Lower leg skin (tissue), 4 donors: ENCODE measurements at regions of chr11 and their contacts with region 1.

Region 1: DNA sequence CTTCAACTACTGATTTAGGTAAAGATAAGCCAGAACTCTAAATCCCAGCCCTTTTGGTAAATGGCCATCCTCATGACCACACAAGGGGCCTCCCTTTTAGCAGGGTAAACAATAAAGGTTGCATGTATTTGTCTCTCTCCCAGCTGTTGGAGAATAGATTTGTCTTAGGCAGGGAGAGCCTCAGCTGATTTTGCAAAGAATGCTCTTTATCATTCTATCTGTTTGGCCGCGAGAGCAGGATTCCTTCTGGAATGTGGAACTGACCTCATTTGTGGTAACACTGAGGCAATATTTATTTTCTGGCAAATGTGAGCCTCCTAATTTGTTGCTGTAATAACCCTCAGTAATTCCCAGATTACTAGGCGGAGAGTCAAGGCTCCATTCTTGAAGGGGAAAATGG is 15.3 kb downstream of the PTS start:
- DNase-seq: no peak
- H3K4me3 ChIP-seq: no peak overlapping the region
- CTCF ChIP-seq: no peak
- POLR2A ChIP-seq: no peak

Region 2: GRCh38 chr11:112269139-112269538 is 27.7 kb after region 1 on chr11:
- intact Hi-C with region 1: loop called (anchors 2 kb)
- DNase-seq: no peak
- H3K4me3 ChIP-seq: no peak overlapping the region
- CTCF ChIP-seq: no peak
- POLR2A ChIP-seq: no peak

Region 3: DNA sequence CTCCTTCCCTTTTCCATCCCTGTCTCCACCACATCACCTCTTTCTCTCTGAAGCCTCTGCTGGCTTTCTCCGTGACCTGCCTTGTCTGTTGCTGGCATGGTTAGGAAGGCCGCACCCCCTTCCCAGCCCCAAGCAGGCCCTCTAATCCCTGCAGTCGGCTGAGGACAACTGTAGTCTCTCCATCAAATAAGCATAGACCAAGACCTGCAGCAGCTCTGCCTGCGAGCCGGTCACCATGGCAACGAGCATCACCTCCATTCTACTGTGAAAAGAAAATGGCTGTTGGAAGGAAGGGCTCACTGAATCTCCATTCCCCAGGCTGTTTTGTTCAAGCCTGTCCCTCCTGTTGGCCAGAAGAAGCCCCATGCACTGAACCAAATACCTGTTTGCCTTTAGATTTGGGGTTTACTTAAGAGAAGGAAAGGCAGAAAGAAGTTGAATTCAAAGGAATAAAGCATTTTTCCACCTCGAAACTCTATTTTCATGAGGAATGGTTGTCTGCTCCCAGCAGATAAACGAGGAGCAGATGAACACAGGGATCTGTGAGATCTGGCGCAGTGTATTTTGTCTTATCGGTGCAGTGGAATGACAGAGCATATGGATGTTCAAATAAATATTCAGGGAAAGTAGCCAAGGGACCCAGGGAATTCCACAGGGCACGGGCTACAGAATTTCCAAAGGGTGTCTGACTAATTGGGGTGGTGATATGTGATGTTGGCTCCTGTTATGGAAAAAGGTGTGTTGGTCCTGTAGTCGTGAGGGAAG is 959.8 kb after region 1 on chr11:
- intact Hi-C with region 1: no loop called
- DNase-seq: no peak
- H3K4me3 ChIP-seq: no peak overlapping the region
- CTCF ChIP-seq: no peak
- POLR2A ChIP-seq: no peak